GM10248 (cell line): ENCODE measurements at regions of chr11 and their contacts with region 1.

Region 1: DNA sequence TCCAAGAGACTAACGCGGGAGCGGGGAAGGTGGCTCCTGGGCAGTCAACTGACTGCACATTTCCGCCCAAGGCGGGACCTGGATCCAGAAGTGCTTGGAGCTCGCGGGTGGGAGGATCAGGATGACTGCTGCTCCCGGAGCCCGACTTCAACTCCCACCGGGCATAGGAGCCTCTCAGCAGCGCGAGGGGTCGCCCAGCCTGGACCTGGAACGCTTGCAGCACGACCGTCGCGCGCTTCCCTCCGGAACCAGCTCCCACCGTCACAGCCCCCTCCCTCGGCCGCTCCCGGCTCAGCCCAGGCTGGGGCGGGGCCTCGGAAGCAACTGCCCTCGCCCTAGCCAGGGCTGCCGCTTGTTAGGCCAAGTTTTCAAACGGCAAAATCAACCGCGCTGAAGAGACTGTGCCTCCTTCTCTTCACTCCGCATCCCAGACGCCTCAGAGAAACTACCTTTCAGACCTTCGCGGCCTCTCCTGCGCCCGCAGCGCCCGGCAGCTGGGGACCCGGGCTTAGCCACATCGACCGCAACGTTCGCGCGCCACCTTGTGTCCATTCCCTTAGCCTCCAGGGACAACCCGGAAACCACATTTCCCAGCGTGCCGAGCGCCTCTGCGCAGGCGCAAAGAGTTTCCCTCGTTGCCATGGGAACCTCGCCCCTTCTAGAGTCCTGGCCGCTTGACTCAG is 14.0 kb downstream of the SSH3 start:
- DNase-seq: peak; percentile 100
- CTCF ChIP-seq: peak; percentile 91

Region 2: DNA sequence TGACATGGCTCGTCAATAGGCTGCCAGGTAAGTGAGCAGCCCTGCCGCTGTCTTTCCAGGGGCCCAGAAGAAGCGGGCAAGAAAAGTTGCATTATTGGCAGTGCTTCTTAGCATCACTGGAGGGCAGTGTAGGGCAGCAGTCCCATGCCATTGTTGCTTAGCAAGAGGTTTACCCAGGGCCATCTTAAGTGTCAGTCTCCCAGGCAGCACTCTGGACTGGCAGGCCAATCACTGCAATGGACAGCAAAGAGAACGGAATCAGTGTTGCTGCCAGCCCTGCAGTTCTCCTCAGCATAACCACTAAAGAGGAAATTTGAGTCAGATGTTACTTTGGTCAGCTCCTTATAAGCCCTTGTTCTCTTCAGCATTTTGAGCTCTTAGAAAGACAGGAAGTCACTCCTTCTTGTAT is 64.5 kb before region 1 on chr11:
- CTCF ChIA-PET with region 1: interaction called, 15 read pairs
- POLR2A ChIA-PET with region 1: no interaction called
- DNase-seq: no peak
- CTCF ChIP-seq: peak; percentile 23

Region 3: DNA sequence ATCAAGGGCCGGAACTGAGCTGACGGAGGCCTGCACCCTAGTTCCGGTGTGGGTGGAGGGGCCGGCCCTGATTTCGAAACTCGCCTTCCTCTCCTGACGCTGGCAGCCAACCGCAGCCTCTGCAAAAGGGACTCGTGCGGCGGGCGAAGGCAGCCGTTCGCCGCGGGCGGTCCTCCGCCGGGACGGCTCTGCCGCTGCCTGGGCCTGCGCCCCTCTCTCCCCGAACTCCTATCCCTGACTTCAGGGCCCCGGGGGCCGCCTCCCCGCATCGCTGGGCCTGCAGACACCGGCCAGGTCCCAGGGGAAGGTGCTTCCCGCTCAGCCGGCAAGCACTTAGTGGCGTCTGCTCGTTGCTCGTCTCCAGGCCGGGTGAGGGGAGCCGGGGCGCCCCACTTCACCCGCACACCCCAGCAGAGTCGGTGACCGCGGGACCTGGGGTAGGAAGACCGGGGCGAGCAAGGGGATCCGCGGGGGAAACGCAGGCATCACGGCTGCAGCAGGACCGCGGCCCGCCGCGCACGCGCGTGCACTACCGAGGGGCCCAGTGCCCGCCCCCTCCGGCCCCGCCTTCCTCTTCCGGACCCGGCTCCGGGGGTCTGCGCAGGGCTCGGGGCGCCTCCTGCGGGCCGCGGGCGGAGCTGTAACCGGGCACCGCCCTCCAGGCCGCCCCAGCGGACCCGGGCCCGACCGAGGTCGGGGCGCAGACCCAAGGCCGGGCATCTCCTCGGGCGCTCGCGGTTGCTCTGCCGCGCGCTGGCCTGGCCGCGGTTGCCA is 28.7 kb before region 1 on chr11:
- CTCF ChIA-PET with region 1: interaction called, 23 read pairs
- POLR2A ChIA-PET with region 1: no interaction called
- DNase-seq: peak; percentile 91
- CTCF ChIP-seq: peak; percentile 47

Region 4: GRCh38 chr11:67345920-67346799 is 28.8 kb after region 1 on chr11:
- CTCF ChIA-PET with region 1: interaction called, 127 read pairs
- POLR2A ChIA-PET with region 1: interaction called, 3 read pairs
- DNase-seq: no peak
- CTCF ChIP-seq: peak; percentile 66